ENCODE measurements at regions of chr13 and their contacts with region 1.

Region 1: GRCh38 chr13:41905600-41906254 is 55.2 kb downstream of the VWA8 start:
- DNase-seq: no peak
- ATAC-seq: peak; percentile 100
- H3K4me3 ChIP-seq: no peak overlapping the region
- H3K27ac ChIP-seq: no peak overlapping the region
- H3K4me1 ChIP-seq: no peaks in the 10 kb centered on the region
- H3K27me3 ChIP-seq: no peaks in the 10 kb centered on the region
- CTCF ChIP-seq: peak; percentile 62 to 76 (median 69)
- EP300 ChIP-seq: no peak
- POLR2A ChIP-seq: no peak
- RAD21 ChIP-seq: peak; percentile 90

Region 2: GRCh38 chr13:41942462-41943094 is 36.9 kb after region 1 on chr13:
- CTCF ChIA-PET with region 1: interaction called, 18 read pairs
- POLR2A ChIA-PET with region 1: no interaction called
- RAD21 ChIA-PET with region 1: no interaction called
- SMC1A ChIA-PET with region 1: interaction called, 4 read pairs
- in situ Hi-C with region 1: no loop called
- intact Hi-C with region 1: no loop called
- DNase-seq: no peak
- ATAC-seq: peak; percentile 93
- H3K4me3 ChIP-seq: no peak overlapping the region
- H3K27ac ChIP-seq: no peak overlapping the region
- H3K4me1 ChIP-seq: no peaks in the 10 kb centered on the region
- H3K27me3 ChIP-seq: no peaks in the 10 kb centered on the region
- CTCF ChIP-seq: peak; percentile 31 to 39 (median 34); a peak in 4 of 6 replicates
- EP300 ChIP-seq: no peak
- POLR2A ChIP-seq: no peak
- RAD21 ChIP-seq: peak; percentile 55

Region 3: GRCh38 chr13:42039946-42040729 is 134.4 kb after region 1 on chr13:
- CTCF ChIA-PET with region 1: interaction called, 12 read pairs
- POLR2A ChIA-PET with region 1: interaction called, 3 read pairs
- RAD21 ChIA-PET with region 1: interaction called, 5 read pairs
- SMC1A ChIA-PET with region 1: interaction called, 4 read pairs
- in situ Hi-C with region 1: no loop called
- intact Hi-C with region 1: loop called (anchors 1 kb)
- DNase-seq: peak; percentile 25
- ATAC-seq: peak; percentile 82
- H3K4me3 ChIP-seq: peak overlapping the region; percentile 88
- H3K27ac ChIP-seq: peak overlapping the region; percentile 76
- H3K4me1 ChIP-seq: no peaks in the 10 kb centered on the region; the same call in 1 of the 2 replicates
- H3K27me3 ChIP-seq: no peaks in the 10 kb centered on the region
- CTCF ChIP-seq: no peak
- EP300 ChIP-seq: no peak
- POLR2A ChIP-seq: peak; percentile 97
- RAD21 ChIP-seq: no peak

Region 4: DNA sequence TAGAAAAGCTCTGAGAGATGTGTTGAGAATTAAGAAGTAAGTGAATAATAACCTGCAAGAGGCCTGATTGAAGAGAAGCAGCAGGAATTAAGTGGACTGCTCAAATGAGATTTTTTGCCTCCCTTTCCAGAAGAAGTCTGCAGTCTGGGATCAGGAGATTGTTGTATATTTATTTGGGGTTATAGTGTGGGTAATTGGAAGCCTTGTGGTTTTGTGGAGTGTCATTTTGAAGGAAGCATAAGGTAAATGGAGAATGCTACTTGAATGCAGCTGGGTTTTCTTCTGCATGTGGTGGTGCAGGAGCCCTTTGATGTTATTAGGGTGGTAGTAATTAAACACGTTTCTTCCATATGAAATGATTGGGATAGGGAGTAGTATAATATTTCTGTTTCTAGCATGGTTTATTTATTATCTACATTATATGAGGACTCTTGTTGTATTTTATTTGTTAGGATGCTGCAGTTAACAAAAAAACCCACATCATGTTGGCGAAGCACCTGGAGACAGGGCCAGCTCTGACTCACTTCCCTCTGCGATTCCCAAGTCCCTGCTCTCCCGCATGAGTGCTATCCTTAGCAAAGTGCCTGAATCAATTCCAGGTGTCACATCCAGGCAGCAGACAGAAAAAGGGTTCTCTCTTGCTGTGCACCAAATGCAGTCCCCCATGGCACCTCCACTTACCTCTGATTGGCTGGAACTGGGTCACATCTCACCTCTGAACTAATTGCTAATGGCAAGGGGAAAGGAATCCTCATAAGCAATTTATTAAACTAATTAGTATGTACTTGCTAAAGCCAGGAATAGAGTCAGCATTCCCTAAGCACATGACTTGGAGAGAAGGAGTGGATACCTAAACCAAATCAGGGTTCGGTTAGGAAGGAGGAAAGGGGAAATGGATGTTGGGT is 197.5 kb after region 1 on chr13:
- CTCF ChIA-PET with region 1: no interaction called
- POLR2A ChIA-PET with region 1: no interaction called
- RAD21 ChIA-PET with region 1: interaction called, 6 read pairs
- SMC1A ChIA-PET with region 1: interaction called, 3 read pairs
- in situ Hi-C with region 1: loop called (anchors 5 kb)
- intact Hi-C with region 1: no loop called
- DNase-seq: no peak
- ATAC-seq: no peak
- H3K4me3 ChIP-seq: no peak overlapping the region
- H3K27ac ChIP-seq: no peak overlapping the region
- H3K4me1 ChIP-seq: peaks cover 7% of the 10 kb centered on the region; the same call in 1 of the 2 replicates
- H3K27me3 ChIP-seq: no peaks in the 10 kb centered on the region
- CTCF ChIP-seq: no peak
- EP300 ChIP-seq: no peak
- POLR2A ChIP-seq: no peak
- RAD21 ChIP-seq: no peak

Region 5: DNA sequence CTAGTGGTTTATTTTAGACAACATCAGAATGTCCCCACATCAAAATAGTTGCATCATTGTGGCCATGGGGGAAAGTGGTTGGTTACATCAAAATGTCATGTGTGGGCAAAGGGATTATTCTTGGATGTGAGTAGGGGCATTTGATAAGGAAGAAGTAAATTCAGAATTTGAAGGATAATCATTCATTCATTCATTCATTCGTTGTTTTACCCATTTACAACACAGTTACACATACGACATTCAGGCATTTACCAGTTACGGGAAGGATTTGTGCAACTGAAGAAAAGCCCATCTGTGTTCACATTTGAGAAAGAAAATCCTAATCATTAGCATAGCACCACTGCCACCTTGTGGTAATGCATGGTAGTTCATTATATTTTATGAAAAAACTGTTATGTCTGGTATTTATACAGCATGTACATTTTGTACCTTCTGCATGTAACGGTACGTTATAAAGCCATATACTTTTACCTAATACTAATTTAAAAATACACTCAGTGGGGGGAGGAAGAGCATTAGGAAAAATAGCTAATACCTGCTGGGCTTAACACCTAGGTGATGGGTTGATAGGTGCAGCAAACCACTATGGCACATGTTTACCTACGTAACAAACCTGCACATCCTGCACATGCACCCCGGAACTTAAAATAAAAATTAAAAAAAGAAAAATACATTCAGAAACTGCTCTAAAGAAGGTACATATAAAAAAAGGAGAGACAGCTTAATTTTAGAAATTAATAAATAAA is 204.9 kb after region 1 on chr13:
- CTCF ChIA-PET with region 1: interaction called, 6 read pairs
- POLR2A ChIA-PET with region 1: no interaction called
- RAD21 ChIA-PET with region 1: interaction called, 8 read pairs
- SMC1A ChIA-PET with region 1: interaction called, 9 read pairs
- in situ Hi-C with region 1: no loop called
- intact Hi-C with region 1: loop called (anchors 1 kb)
- DNase-seq: peak; percentile 68
- ATAC-seq: peak; percentile 74
- H3K4me3 ChIP-seq: no peak overlapping the region
- H3K27ac ChIP-seq: no peak overlapping the region
- H3K4me1 ChIP-seq: 0 out of 2 replicates have a peak, but pooled peaks cover 3% of the 10 kb centered on the region
- H3K27me3 ChIP-seq: no peaks in the 10 kb centered on the region
- CTCF ChIP-seq: peak; percentile 54 to 84 (median 66); a peak in 5 of 6 replicates
- EP300 ChIP-seq: no peak
- POLR2A ChIP-seq: no peak
- RAD21 ChIP-seq: peak; percentile 87